Body of pancreas (tissue), 4 donors: ENCODE measurements at regions of chr14 and their contacts with region 1.

Region 1: GRCh38 chr14:65824285-65824977 is 411.9 kb downstream of the FUT8 start:
- DNase-seq: peak; percentile 54 to 57 (median 56)
- ATAC-seq: peak; percentile 86
- H3K4me3 ChIP-seq: no peak overlapping the region
- H3K27ac ChIP-seq: no peak overlapping the region
- H3K4me1 ChIP-seq: no peaks in the 10 kb centered on the region
- H3K27me3 ChIP-seq: no peaks in the 10 kb centered on the region
- CTCF ChIP-seq: peak; percentile 64 to 95 (median 86)
- POLR2A ChIP-seq: no peak

Region 2: DNA sequence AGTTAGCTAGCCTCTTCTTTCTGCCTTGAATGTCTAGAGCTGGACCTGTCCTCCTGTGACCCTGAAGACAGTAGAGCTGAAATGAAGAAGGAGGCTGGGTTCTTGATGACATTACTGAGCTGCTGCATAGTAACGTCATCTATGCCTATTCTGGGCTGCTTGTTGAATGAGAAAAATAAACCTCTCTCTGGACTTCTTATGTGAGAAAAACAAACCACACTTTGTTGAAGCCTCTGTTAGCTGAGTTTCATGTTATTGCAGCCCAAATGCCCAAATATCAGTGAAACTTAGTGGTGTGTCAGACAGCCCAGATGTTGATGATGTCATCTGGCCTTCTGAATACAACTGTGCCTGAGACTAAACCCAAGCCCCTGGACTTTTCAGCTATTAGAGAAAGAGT is 655.1 kb before region 1 on chr14:
- intact Hi-C with region 1: loop called (anchors 5 kb)
- DNase-seq: no peak
- ATAC-seq: no peak
- H3K4me3 ChIP-seq: no peak overlapping the region
- H3K27ac ChIP-seq: no peak overlapping the region
- H3K4me1 ChIP-seq: peaks cover 10% of the 10 kb centered on the region
- H3K27me3 ChIP-seq: peaks cover 0 to 8% of the 10 kb centered on the region in 2 donors
- CTCF ChIP-seq: no peak
- POLR2A ChIP-seq: no peak

Region 3: DNA sequence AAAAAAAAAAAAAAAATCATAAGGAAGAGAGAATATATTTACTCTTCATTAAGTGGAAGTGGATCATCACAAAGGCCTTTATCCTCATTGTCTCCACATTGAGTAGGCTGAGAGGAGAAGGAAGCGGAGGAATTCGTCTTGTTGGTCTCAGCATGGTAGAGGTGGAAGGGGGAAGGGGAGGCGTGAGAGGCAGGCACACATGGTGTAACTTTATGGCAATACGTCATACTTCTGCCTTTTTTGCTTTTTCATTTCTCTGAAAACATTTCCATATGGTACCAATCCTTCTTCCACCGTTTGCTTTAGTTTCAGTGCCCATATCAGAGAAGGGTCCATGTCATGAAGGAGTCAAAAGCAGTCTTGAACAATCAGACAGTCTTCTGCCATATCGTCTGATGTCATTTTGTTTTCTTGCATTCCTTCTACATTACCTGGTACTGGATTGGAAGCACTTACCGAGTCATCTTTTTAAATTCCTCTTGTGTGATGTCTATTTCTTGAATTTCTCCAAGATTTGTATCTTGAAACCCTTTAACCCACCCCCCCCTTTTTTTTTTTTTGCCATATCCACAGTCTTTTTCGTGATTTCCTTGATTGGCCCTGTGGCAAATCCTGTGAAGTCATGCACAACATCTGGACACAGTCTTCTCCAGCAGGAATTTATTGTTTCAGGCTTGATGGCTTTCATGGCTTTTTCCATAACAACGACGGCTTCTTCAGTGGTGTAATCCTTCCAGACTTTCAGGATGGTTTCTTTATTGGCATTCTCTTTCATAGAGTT is 403.0 kb before region 1 on chr14:
- intact Hi-C with region 1: loop called (anchors 10 kb)
- DNase-seq: no peak
- ATAC-seq: no peak
- H3K4me3 ChIP-seq: no peak overlapping the region
- H3K27ac ChIP-seq: no peak overlapping the region
- H3K4me1 ChIP-seq: no peaks in the 10 kb centered on the region
- H3K27me3 ChIP-seq: no peaks in the 10 kb centered on the region
- CTCF ChIP-seq: no peak
- POLR2A ChIP-seq: no peak